MCF 10A (cell line): ENCODE measurements at regions of chr11 and their contacts with region 1.

Region 1: GRCh38 chr11:35144136-35144741 is 5.3 kb downstream of the CD44 start:
- DNase-seq: peak; percentile 90
- H3K4me3 Mint-ChIP-seq: peak overlapping the region; percentile 64
- H3K27ac Mint-ChIP-seq: peak overlapping the region; percentile 73
- H3K4me1 Mint-ChIP-seq: peaks cover 57% of the 10 kb centered on the region
- H3K27me3 Mint-ChIP-seq: no peaks in the 10 kb centered on the region
- CTCF ChIP-seq: no peak

Region 2: GRCh38 chr11:34671946-34672345 is 472.3 kb before region 1 on chr11:
- CTCF ChIA-PET with region 1: no interaction called
- POLR2A ChIA-PET with region 1: no interaction called
- intact Hi-C with region 1: no loop called
- DNase-seq: no peak
- H3K4me3 Mint-ChIP-seq: no peak overlapping the region
- H3K27ac Mint-ChIP-seq: no peak overlapping the region
- H3K4me1 Mint-ChIP-seq: peaks cover 12% of the 10 kb centered on the region
- H3K27me3 Mint-ChIP-seq: no peaks in the 10 kb centered on the region
- CTCF ChIP-seq: no peak

Region 3: GRCh38 chr11:34926101-34926830 is 218.0 kb before region 1 on chr11:
- CTCF ChIA-PET with region 1: interaction called, 7 read pairs
- POLR2A ChIA-PET with region 1: interaction called, 4 read pairs
- intact Hi-C with region 1: loop called (anchors 2 kb)
- DNase-seq: peak; percentile 59
- H3K4me3 Mint-ChIP-seq: no peak overlapping the region
- H3K27ac Mint-ChIP-seq: no peak overlapping the region
- H3K4me1 Mint-ChIP-seq: peaks cover 34% of the 10 kb centered on the region
- H3K27me3 Mint-ChIP-seq: no peaks in the 10 kb centered on the region
- CTCF ChIP-seq: peak; percentile 68

Region 4: GRCh38 chr11:35030716-35031213 is 113.5 kb before region 1 on chr11:
- CTCF ChIA-PET with region 1: interaction called, 3 read pairs
- POLR2A ChIA-PET with region 1: interaction called, 35 read pairs
- intact Hi-C with region 1: no loop called
- DNase-seq: peak; percentile 97
- H3K4me3 Mint-ChIP-seq: no peak overlapping the region
- H3K27ac Mint-ChIP-seq: peak overlapping the region; percentile 77
- H3K4me1 Mint-ChIP-seq: peaks cover 30% of the 10 kb centered on the region
- H3K27me3 Mint-ChIP-seq: no peaks in the 10 kb centered on the region
- CTCF ChIP-seq: no peak

Region 5: DNA sequence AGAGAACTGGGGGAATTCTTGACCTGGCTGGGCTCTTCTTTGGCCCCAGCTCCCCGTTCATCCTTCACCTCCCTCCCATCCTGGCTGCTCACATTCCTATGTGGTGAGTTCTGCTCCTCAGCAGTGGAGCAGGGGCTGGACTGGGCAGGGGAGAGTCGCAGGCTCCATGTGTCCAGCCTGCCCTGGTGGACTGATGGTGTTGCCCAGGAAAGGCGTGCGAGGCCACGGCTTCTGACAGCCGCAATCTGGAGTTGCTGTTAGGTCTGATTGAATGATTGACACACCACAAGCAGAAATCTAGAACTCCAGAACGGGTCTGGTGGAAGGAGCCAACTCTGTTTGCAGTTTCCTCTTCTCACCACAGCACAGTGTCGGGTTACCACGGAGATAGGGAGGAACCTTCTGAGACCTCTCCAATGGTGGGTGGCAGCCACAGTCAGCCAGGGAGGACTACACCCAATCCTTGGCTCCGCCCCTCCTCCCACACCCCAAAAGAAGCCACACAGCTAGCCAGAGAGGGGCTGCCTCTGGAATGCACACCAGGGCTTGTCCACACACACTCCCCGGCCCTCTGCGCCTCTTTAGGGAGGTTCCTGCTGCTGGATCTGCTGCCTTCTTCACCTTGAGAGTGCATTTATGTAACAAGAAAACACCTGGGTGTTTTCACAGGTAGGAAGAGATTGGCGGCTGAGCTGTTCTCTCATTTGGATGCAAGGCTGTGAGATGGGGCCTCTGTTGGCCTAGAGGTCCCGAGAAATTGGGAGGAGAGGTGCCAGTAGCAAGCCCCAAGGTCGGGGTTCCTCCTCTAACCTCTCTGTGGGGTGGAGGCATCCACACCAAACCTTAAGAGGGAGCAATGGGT is 61.7 kb before region 1 on chr11:
- CTCF ChIA-PET with region 1: interaction called, 3 read pairs
- POLR2A ChIA-PET with region 1: interaction called, 16 read pairs
- intact Hi-C with region 1: loop called (anchors 2 kb)
- DNase-seq: peak; percentile 86
- H3K4me3 Mint-ChIP-seq: peak overlapping the region; percentile 24
- H3K27ac Mint-ChIP-seq: peak overlapping the region; percentile 73
- H3K4me1 Mint-ChIP-seq: peaks cover 39% of the 10 kb centered on the region
- H3K27me3 Mint-ChIP-seq: no peaks in the 10 kb centered on the region
- CTCF ChIP-seq: no peak

Region 6: GRCh38 chr11:35165423-35166368 is 21.5 kb after region 1 on chr11:
- CTCF ChIA-PET with region 1: interaction called, 9 read pairs
- POLR2A ChIA-PET with region 1: interaction called, 233 read pairs
- intact Hi-C with region 1: loop called (anchors 2 kb)
- DNase-seq: peak; percentile 65
- H3K4me3 Mint-ChIP-seq: peak overlapping the region; percentile 54
- H3K27ac Mint-ChIP-seq: peak overlapping the region; percentile 94
- H3K4me1 Mint-ChIP-seq: peaks cover 46% of the 10 kb centered on the region
- H3K27me3 Mint-ChIP-seq: no peaks in the 10 kb centered on the region
- CTCF ChIP-seq: no peak

Region 7: DNA sequence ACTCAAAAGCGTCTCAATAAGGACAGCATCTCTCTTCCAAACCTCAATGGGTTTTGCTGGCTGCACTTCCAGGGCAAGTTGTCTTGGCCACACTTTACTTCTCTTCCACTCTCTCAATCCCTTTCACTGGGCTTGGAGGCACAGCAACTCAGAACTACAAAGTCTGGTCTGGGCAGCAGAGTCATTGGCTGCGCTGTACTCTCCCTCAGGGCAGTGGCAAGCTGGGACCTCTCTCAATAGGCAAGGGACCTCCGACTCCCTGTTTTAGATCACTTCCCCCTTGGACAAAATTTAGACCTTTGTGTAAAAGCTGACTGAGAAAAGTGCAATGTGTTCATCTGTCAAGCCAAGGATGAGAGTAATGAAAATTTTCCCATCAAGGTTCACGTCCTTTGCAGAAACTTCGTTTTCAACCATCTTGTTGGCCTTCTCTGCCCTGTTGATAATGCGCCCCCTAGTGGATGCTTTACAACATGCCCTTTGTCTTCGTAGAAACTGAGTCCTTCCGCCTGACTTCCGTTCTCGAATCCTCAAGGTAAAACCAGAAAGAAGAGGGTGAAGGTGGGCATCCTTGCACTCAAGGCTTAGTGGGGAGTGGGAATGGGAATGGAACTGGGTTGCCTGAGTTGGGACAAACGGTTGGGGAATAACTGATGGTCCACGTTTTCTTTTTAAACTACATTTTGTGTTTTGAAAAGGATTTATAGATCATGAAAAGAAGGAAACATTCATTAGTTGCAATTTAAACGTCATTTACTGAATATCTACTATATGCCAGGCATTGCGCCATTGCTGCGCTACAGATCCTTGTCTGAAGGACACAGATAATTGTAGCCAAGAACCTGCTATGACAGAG is 93.8 kb after region 1 on chr11:
- CTCF ChIA-PET with region 1: interaction called, 4 read pairs
- POLR2A ChIA-PET with region 1: no interaction called
- intact Hi-C with region 1: loop called (anchors 5 kb)
- DNase-seq: peak; percentile 83
- H3K4me3 Mint-ChIP-seq: no peak overlapping the region
- H3K27ac Mint-ChIP-seq: no peak overlapping the region
- H3K4me1 Mint-ChIP-seq: peaks cover 22% of the 10 kb centered on the region
- H3K27me3 Mint-ChIP-seq: no peaks in the 10 kb centered on the region
- CTCF ChIP-seq: peak; percentile 54